HEK293T (cell line): ENCODE measurements at regions of chr17 and their contacts with region 1.

Region 1: GRCh38 chr17:79789534-79790353 is 7.1 kb downstream of the CBX8 start:
- DNase-seq: peak; percentile 67

Region 2: GRCh38 chr17:79651761-79652160 is 138.0 kb before region 1 on chr17:
- CTCF ChIA-PET with region 1: no interaction called
- POLR2A ChIA-PET with region 1: no interaction called
- DNase-seq: peak; percentile 1

Region 3: DNA sequence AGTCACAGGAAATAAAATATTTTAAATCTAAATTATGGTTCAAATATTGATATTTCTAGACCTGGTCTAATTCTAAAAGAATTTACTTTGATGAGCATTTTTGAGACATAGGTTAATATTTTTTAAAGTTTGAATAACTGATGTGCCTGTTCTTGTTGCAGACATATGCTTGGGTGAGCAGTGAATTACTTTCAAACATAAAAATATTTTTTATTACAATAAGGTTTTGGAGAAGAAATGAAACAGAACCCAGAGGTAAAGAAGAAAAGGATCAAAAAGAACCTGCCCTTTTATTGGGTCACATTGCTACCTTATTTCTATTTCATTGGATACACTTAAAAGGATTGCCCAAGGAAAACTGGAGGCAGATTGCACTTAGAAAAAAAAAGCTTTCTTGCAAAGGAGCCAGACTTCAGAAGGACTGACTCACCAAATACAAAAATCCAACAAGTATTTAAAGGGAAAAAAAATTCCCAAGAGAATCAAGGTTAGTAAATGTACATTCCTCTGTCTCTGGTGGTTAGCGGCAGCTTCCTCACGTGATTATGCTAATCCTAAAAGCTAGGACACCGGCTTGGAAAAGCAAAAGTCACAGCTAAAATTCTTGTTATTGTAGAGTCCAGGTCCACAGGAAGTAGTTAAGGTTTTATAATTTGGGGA is 40.5 kb before region 1 on chr17:
- CTCF ChIA-PET with region 1: interaction called, 15 read pairs
- POLR2A ChIA-PET with region 1: interaction called, 3 read pairs
- DNase-seq: no peak

Region 4: GRCh38 chr17:79777894-79778503 is 11.7 kb before region 1 on chr17 and contains the start of gene CBX2:
- CTCF ChIA-PET with region 1: interaction called, 8 read pairs
- POLR2A ChIA-PET with region 1: interaction called, 13 read pairs
- DNase-seq: peak; percentile 97

Region 5: DNA sequence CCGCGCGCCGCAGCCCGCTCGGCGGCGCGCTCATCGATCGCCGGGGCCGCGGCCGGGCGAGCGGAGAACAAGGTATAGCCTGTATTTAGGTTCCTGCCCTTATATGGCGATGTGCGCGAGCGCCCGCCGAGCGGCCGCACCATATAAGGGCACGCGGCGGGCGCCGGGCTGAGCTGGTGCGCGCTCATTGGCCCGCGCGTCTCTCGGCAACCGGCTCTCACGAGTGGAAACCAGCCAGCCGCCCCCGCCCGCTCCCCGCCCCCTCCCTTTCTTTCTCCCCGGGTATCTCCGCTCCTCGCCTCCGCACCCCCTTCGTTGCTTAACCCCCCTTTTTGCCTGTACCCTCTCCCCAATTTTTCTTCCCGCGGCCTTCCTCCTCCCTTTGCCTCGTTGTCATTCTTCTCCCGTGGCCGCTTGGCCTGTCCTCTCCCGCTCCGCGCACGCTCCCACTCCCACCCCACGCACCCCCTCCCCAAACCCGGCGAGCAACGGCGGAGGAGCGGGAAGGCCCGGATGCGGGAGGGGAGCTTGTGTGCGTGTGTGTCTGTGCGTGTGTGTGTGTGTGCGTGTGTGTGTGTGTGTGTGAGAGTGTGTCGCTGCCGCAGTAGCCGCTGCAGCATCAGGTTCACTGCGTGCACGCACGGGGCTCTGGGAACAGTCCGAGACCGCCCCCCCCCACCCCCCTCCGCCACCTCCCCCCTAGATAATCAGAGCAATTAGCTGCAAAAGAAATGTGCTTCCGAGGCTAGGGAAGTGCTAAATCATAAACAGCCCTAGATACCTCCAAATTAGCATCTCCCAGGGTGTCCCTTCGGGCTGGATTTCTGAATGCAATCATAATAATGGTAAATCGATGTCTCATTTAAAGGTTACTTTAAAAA is 20.6 kb after region 1 on chr17:
- CTCF ChIA-PET with region 1: interaction called, 11 read pairs
- POLR2A ChIA-PET with region 1: interaction called, 17 read pairs
- DNase-seq: peak; percentile 91

Region 6: DNA sequence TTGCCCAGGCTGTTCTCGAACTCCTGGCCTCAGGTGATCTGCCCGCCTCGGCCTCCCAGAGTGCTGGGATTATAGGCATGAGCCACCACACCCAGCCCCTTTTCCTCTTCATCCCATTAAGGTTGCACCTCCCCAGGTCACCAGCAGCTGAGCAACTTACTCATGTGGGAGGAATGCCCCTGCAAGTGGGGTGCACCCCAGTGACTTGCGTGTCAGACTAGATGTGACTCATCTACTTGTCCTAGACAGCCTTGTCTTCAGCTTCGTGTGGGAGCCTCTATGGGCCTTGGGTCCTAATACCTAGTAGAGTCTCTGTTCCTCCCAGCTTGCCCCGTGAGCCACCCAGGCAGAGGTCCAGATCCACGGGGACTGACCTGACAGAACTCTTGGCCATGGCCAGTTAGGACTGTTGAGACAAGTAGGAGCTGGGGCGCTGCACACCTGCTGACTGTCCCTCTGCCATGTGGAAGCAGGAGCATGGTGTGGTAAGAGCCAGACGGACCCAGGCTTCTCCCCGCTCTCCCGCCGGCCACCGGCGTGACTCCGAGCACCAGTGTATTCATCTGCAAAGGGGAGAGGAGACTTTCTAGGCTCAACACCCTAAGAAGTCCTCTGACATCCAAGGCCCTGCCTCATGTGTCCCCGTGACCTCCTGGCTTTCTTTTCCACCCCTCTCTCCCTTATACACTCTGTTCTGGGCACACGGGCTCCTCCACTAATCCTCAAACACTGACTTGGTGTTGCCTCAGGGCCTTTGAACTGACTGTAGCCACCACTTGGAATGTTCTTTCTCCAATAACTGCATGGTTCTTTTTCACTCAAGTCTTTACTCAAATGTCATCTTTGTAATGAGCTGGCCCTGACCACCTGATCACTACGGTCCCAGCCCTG is 61.1 kb after region 1 on chr17:
- CTCF ChIA-PET with region 1: no interaction called
- POLR2A ChIA-PET with region 1: no interaction called
- DNase-seq: no peak